AG04450 (cell line): ENCODE measurements at regions of chr2 and their contacts with region 1.

Region 1: GRCh38 chr2:231713730-231714430 is 5.6 kb downstream of the PTMA start:
- DNase-seq: peak; percentile 72
- H3K4me3 ChIP-seq: no peak overlapping the region
- H3K27ac ChIP-seq: peak overlapping the region; percentile 75
- H3K27me3 ChIP-seq: no peaks in the 10 kb centered on the region
- CTCF ChIP-seq: peak; percentile 94

Region 2: DNA sequence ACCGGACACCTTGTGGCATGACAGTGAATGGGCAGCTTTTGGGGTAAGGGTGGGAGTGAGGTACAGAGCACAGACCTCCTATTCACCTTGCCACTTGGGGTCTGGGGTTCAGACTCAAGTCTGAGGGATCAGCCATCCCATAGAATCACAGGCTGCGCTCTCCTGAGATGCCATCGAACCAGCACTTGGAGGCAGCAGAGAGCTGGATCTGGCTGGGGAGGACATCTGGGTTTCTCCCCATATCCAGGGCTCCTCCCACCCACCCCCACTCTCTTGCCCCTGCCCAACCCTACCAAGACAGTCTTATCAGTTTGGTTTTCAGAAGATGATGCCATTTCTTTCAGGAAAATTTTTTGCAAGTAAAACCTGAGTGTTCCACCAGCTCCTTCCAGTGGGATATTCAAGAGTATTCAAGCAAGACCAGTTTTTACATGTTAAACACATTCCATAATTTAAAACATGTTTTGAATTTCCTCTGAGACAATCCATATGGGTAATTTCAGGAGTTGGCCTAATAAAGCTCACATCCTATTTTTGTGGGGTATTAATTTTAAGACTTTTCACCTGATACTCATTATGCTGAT is 150.4 kb before region 1 on chr2:
- CTCF ChIA-PET with region 1: interaction called, 23 read pairs
- POLR2A ChIA-PET with region 1: no interaction called
- DNase-seq: peak; percentile 18
- H3K4me3 ChIP-seq: no peak overlapping the region
- H3K27ac ChIP-seq: no peak overlapping the region
- H3K27me3 ChIP-seq: peaks cover 9% of the 10 kb centered on the region
- CTCF ChIP-seq: peak; percentile 77

Region 3: GRCh38 chr2:231662028-231662810 is 51.7 kb before region 1 on chr2:
- CTCF ChIA-PET with region 1: interaction called, 5 read pairs
- POLR2A ChIA-PET with region 1: interaction called, 25 read pairs
- DNase-seq: peak; percentile 95
- H3K4me3 ChIP-seq: peak overlapping the region; percentile 46
- H3K27ac ChIP-seq: peak overlapping the region; percentile 61
- H3K27me3 ChIP-seq: no peaks in the 10 kb centered on the region
- CTCF ChIP-seq: no peak

Region 4: DNA sequence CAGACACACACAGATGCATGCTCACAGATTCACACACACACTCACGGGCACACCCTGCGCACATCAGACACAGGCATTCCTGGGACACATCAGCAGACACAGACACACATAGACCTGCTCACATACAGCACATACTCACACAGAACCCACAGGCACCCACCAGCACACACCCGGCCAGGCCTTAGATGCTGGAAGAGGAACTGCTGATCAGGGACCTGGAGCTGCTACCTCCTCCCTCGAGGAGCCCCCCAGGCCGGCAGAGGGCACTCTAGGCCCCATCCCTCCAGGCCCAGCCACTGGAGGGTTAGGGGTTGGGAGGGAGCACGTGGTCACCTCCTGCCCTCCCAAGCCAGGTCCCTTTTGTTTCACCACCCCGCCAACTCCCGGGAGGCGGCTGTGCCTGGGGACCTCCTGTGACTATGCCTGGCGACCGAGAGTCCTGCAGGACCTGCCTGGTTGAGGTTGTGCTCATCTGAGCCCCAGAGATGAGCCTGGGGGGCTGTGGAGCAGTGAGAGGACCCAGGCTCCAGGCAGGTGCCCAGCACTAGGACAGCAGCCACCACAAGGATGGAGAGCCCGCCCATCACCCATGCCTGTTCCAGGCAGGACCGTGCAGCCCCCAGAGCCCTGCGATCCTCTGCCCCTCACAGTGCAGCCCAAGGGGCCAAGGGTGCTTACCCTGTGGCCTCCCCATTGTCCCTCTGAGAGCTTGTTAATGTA is 26.6 kb before region 1 on chr2:
- CTCF ChIA-PET with region 1: interaction called, 13 read pairs
- POLR2A ChIA-PET with region 1: interaction called, 35 read pairs
- DNase-seq: no peak
- H3K4me3 ChIP-seq: no peak overlapping the region
- H3K27ac ChIP-seq: no peak overlapping the region
- H3K27me3 ChIP-seq: no peaks in the 10 kb centered on the region
- CTCF ChIP-seq: peak; percentile 55

Region 5: GRCh38 chr2:231701456-231702373 is 12.2 kb before region 1 on chr2:
- CTCF ChIA-PET with region 1: interaction called, 10 read pairs
- POLR2A ChIA-PET with region 1: no interaction called
- DNase-seq: no peak
- H3K4me3 ChIP-seq: no peak overlapping the region
- H3K27ac ChIP-seq: no peak overlapping the region
- H3K27me3 ChIP-seq: no peaks in the 10 kb centered on the region
- CTCF ChIP-seq: no peak

Region 6: GRCh38 chr2:231732604-231733003 is 18.7 kb after region 1 on chr2:
- CTCF ChIA-PET with region 1: interaction called, 11 read pairs
- POLR2A ChIA-PET with region 1: no interaction called
- DNase-seq: no peak
- H3K4me3 ChIP-seq: no peak overlapping the region
- H3K27ac ChIP-seq: no peak overlapping the region
- H3K27me3 ChIP-seq: no peaks in the 10 kb centered on the region
- CTCF ChIP-seq: no peak